Aorta (tissue), 5 donors: ENCODE measurements at regions of chr12 and their contacts with region 1.

Region 1: GRCh38 chr12:65602610-65603295 is 221.5 kb upstream of the HMGA2 start:
- DNase-seq: peak; percentile 84 to 89
- ATAC-seq: peak; percentile 93
- H3K4me3 ChIP-seq: no peak overlapping the region
- H3K27ac ChIP-seq: no peak overlapping the region
- H3K4me1 ChIP-seq: peaks cover 3 to 4% of the 10 kb centered on the region in 2 donors
- H3K27me3 ChIP-seq: no peaks in the 10 kb centered on the region

Region 2: DNA sequence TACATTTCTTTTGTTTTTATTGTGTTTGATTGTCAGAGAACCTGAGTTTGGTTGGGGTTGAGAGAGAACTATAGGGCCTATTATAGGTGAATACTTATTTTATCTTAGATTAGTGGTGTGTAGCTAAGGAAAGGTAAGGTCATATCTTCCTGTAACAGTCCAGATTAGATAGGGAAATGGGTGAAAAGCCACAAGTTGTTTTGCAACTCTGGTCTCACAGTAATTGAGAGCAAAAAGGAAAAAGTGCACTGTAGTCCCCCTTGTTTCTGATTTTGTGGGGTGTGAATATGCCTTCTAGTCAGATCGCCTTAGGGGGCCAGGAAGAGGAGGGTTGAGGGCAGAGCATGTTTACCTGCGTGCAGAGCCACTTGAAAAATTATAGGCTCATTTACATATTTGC is 315.3 kb before region 1 on chr12:
- intact Hi-C with region 1: no loop called
- DNase-seq: no peak
- ATAC-seq: no peak
- H3K4me3 ChIP-seq: no peak overlapping the region
- H3K27ac ChIP-seq: no peak overlapping the region
- H3K4me1 ChIP-seq: peaks cover 3 to 9% of the 10 kb centered on the region in 2 donors
- H3K27me3 ChIP-seq: no peaks in the 10 kb centered on the region

Region 3: GRCh38 chr12:65673732-65674131 is 71.0 kb after region 1 on chr12:
- intact Hi-C with region 1: loop called in 1 of 2 experiments (anchors 5 kb)
- DNase-seq: no peak
- ATAC-seq: no peak
- H3K4me3 ChIP-seq: no peak overlapping the region
- H3K27ac ChIP-seq: no peak overlapping the region
- H3K4me1 ChIP-seq: no peaks in the 10 kb centered on the region
- H3K27me3 ChIP-seq: no peaks in the 10 kb centered on the region

Region 4: GRCh38 chr12:65986047-65986446 is 383.3 kb after region 1 on chr12:
- intact Hi-C with region 1: loop called in 1 of 2 experiments (anchors 5 kb)
- DNase-seq: no peak
- ATAC-seq: no peak
- H3K4me3 ChIP-seq: no peak overlapping the region
- H3K27ac ChIP-seq: no peak overlapping the region
- H3K4me1 ChIP-seq: no peaks in the 10 kb centered on the region
- H3K27me3 ChIP-seq: no peaks in the 10 kb centered on the region